ENCODE measurements at regions of chr19 and their contacts with region 1.

Region 1: DNA sequence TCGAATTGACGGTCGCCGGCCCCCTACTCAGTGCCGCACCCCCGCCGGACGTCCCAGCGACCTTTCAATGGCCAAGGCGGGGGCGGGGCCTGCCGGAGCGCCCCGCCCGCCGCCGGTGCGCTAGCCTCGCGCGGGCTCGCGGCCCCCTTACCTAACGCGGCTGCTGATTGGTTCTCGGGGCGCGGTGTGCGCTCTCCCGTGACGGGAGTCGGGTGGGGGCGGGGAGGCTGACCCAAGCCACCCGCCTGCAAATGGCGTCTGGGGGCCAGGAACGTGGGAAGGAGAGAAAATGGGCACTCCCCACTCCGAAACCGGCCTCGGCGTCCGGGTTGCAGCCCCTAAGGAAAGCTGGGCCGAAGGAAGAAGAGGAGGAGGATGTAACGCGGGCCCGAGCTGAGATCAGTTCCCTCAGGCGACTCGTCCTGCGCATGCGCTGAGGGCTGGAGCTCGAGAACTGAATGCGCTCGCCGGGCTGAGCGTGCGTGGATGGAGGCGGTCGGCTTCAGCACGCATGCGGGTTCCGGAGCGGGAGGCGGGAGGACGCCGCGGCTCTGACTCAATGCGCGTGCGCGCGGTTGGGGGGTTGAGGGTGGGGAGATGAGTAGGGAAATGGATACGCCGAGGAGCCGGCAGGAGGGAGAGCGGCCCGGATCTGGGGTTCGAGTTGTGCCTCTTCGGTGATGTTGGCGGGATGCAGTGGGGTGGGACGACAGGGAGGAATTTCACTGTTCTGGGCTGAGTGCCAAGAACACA is at the start of gene SMG9:
- DNase-seq: peak; percentile 99
- H3K4me3 Mint-ChIP-seq: peak within 1 kb of the TSS; percentile 95
- H3K27ac Mint-ChIP-seq: peak within 1 kb of the TSS; percentile 99
- H3K4me1 Mint-ChIP-seq: peaks cover 63% of the 10 kb centered on the region
- H3K27me3 Mint-ChIP-seq: no peaks in the 10 kb centered on the region
- total RNA-seq, gene SMG9: 58.2 to 58.3 TPM

Region 2: GRCh38 chr19:43526884-43527859 is 227.5 kb before region 1 on chr19 and contains the start of gene ETHE1:
- CTCF ChIA-PET with region 1: no interaction called
- POLR2A ChIA-PET with region 1: no interaction called
- intact Hi-C with region 1: loop called (anchors 5 kb)
- DNase-seq: peak; percentile 85
- H3K4me3 Mint-ChIP-seq: peak within 1 kb of the TSS; percentile 92
- H3K27ac Mint-ChIP-seq: peak within 1 kb of the TSS; percentile 98
- H3K4me1 Mint-ChIP-seq: peaks cover 24% of the 10 kb centered on the region
- H3K27me3 Mint-ChIP-seq: no peaks in the 10 kb centered on the region
- total RNA-seq, gene ETHE1: 104 to 112 TPM

Region 3: GRCh38 chr19:43723588-43723987 is 31.1 kb before region 1 on chr19:
- CTCF ChIA-PET with region 1: no interaction called
- POLR2A ChIA-PET with region 1: no interaction called
- intact Hi-C with region 1: no loop called
- DNase-seq: no peak
- H3K4me3 Mint-ChIP-seq: no peak overlapping the region
- H3K27ac Mint-ChIP-seq: no peak overlapping the region
- H3K4me1 Mint-ChIP-seq: peaks cover 5% of the 10 kb centered on the region
- H3K27me3 Mint-ChIP-seq: no peaks in the 10 kb centered on the region

Region 4: DNA sequence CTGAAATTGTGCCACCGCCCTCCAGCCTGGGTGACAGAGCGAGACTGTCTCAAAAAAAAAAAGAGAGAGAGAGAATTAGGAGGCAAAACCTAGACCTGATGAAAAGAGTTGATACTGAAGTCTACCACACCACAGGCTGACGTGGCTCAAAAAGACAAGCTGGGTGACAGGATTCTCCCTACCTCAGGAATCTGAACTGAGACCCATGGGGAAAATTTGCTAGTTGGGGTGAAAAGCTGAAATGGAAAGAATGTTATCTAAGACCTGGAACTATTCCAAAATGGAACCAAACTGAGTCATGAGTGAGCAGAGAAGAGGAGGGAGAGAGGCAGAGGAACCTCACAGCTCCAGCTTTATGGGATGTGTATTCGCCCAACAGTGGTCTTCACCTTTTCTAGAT is 11.7 kb before region 1 on chr19:
- CTCF ChIA-PET with region 1: interaction called, 30 read pairs
- POLR2A ChIA-PET with region 1: interaction called, 4 read pairs
- intact Hi-C with region 1: no loop called
- DNase-seq: no peak
- H3K4me3 Mint-ChIP-seq: no peak overlapping the region
- H3K27ac Mint-ChIP-seq: no peak overlapping the region
- H3K4me1 Mint-ChIP-seq: peaks cover 17% of the 10 kb centered on the region
- H3K27me3 Mint-ChIP-seq: no peaks in the 10 kb centered on the region

Region 5: DNA sequence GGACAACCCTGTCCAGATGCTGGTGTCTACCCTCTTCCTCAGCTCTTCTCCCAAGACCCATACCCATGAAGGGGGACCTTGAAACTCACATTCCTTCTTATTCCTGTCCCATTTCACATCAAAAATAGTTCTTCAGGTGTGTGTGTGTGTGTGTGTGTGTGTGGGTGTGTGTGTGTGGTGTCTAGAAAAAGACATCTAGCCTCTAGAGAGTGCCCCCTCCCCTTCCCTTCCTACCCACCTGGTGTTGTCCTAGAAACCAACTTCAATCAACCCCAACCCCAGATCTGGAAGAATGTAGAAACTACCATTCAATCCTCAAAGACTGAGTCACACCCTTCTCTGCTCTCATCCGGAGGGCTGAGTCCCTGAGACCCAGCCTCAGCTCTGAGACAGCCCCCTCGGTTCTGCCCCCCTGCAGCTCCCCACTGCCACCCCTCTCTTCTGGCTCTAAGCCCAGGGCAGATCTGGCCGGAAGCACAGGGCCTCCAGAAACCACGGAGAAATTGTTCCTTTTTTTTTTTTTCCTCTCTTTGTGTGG is 22.6 kb after region 1 on chr19:
- CTCF ChIA-PET with region 1: interaction called, 14 read pairs
- POLR2A ChIA-PET with region 1: interaction called, 82 read pairs
- intact Hi-C with region 1: loop called (anchors 1 kb)
- DNase-seq: peak; percentile 62
- H3K4me3 Mint-ChIP-seq: peak overlapping the region; percentile 80
- H3K27ac Mint-ChIP-seq: peak overlapping the region; percentile 92
- H3K4me1 Mint-ChIP-seq: peaks cover 57% of the 10 kb centered on the region
- H3K27me3 Mint-ChIP-seq: no peaks in the 10 kb centered on the region

Region 6: GRCh38 chr19:44746946-44747738 is 992.5 kb after region 1 on chr19:
- CTCF ChIA-PET with region 1: no interaction called
- POLR2A ChIA-PET with region 1: no interaction called
- intact Hi-C with region 1: loop called (anchors 10 kb)
- DNase-seq: peak; percentile 96
- H3K4me3 Mint-ChIP-seq: peak overlapping the region; percentile 84
- H3K27ac Mint-ChIP-seq: peak overlapping the region; percentile 97
- H3K4me1 Mint-ChIP-seq: peaks cover 46% of the 10 kb centered on the region
- H3K27me3 Mint-ChIP-seq: no peaks in the 10 kb centered on the region

Measured in activated CD4-positive, alpha-beta memory T cell treated with anti-CD3 and anti-CD28 coated beads for 36 hours (primary cell).